SK-N-SH (cell line): ENCODE measurements at regions of chr16 and their contacts with region 1.

Region 1: DNA sequence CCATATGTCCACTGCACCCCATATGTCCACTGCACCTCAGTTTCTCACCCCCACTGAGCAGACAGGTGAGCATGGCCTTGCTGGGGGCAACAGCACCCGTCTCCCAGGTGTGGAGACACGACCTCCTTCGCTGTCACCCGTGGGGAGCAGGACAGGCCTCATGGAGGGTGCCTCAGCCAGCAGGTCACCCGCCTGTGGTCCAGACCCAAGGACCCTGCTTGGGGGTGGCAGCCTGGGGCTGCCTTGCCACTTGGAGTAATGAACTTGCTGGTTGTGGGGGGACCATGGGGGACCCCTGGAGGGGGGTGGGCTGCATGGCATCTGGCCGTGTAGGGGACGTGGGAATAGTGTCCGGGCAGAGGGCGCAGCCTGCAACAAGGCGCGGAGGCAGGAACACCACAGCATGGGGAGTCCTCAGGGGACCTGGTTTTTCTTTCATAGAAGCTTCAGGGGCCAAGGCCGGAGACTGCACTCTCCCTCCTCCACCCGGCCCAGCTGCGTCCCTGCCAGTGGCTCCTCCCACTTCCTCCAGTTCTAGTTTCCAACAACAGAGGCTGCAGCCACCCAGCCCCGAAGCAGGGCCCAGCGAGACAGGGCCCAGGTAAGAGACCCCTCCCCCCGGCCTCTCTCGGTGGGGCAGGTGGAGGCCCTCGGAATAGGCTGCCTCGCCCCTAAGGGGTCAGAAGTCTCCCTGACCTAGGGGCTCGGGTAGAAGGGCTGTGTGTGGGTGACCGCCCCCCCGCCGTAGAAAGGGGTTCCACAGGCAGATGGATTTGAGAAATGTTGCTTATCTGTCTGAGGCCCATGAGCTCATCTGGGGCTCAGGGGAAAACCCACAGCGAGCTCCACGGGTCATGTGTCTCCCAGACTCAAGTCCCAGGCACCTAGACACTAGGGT is at the start of gene NHLRC4:
- DNase-seq: peak; percentile 80
- H3K4me3 ChIP-seq: no peak within 1 kb of the TSS; a peak in 1 of 4 replicates
- H3K27ac ChIP-seq: peak within 1 kb of the TSS in 1 of 2 experiments; percentile 95; a peak in 2 of 4 replicates
- H3K4me1 ChIP-seq: peaks cover 11 to 58% of the 10 kb centered on the region in 2 experiments; a peak in 2 of 4 replicates
- H3K27me3 ChIP-seq: peaks cover 2% of the 10 kb centered on the region; the same call in 1 of the 2 replicates
- CTCF ChIP-seq: no peak
- EP300 ChIP-seq: no peak
- RAD21 ChIP-seq: no peak
- polyA plus RNA-seq, gene NHLRC4: 0.69 and 0.70 TPM in 2 replicates

Region 2: GRCh38 chr16:555528-556478 is 10.9 kb before region 1 on chr16:
- CTCF ChIA-PET with region 1: interaction called, 6 read pairs
- POLR2A ChIA-PET with region 1: interaction called, 12 read pairs
- DNase-seq: peak; percentile 79
- H3K4me3 ChIP-seq: no peak overlapping the region
- H3K27ac ChIP-seq: no peak overlapping the region; a peak in 1 of 4 replicates
- H3K4me1 ChIP-seq: peaks cover 0 to 9% of the 10 kb centered on the region in 2 experiments; a peak in 1 of 4 replicates
- H3K27me3 ChIP-seq: peaks cover 16% of the 10 kb centered on the region
- CTCF ChIP-seq: no peak
- EP300 ChIP-seq: no peak
- RAD21 ChIP-seq: peak; percentile 28; the same call in 1 of the 2 replicates